ENCODE measurements at regions of chr19 and their contacts with region 1.

Region 1: DNA sequence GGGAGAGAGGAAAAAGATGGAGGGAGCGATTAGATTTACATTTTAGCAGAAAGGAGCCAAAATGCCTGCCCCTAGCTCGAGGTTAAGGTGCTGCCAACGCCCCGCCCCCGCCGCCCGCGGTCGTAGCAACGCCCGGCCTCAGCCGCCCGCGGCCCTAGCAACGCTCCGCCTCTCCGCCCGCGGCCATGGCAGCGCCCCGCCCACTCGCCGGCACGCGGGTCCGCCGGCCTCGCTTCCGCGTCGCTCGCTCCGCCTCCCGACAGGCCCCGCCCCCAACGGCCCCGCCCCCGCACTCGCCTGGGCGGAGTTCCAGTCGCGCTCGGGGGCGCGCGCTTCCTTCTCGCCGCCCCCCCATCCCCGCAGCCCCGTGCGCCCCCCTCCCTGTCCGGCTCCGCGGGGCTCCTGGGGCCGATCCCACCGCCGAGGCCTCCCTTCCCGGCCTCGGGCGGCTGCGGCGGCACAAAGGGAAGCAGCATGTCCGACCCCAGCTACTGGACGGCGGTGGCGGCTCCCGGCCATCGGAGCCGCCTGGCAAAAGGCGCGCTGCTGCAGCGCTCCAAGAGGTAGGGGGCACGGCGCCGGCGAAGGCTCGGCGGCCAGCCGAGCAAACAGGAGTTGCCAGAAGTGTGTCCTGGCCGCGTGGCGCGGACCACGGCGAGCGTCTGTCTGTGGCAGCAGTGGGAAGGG is 20.3 kb downstream of the MAST3 start:
- DNase-seq: peak; percentile 73
- ATAC-seq: peak; percentile 95
- H3K4me3 ChIP-seq: peak overlapping the region; percentile 61
- H3K27ac ChIP-seq: peak overlapping the region; percentile 8; the same call in 1 of the 2 replicates
- H3K4me1 ChIP-seq: peaks cover 13% of the 10 kb centered on the region
- H3K27me3 ChIP-seq: no peaks in the 10 kb centered on the region
- CTCF ChIP-seq: peak; percentile 11; the same call in 1 of the 2 replicates
- POLR2A ChIP-seq: no peak
- RAD21 ChIP-seq: no peak

Region 2: GRCh38 chr19:18152444-18152816 is 34.6 kb after region 1 on chr19:
- CTCF ChIA-PET with region 1: interaction called, 4 read pairs
- POLR2A ChIA-PET with region 1: no interaction called
- dilution Hi-C with region 1: no loop called
- in situ Hi-C with region 1: no loop called
- intact Hi-C with region 1: loop called (anchors 5 kb)
- DNase-seq: peak; percentile 96
- ATAC-seq: peak; percentile 55
- H3K4me3 ChIP-seq: peak overlapping the region; percentile 53
- H3K27ac ChIP-seq: peak overlapping the region; percentile 88
- H3K4me1 ChIP-seq: peaks cover 18% of the 10 kb centered on the region
- H3K27me3 ChIP-seq: no peaks in the 10 kb centered on the region
- CTCF ChIP-seq: peak; percentile 68
- POLR2A ChIP-seq: no peak
- RAD21 ChIP-seq: peak; percentile 43

Region 3: DNA sequence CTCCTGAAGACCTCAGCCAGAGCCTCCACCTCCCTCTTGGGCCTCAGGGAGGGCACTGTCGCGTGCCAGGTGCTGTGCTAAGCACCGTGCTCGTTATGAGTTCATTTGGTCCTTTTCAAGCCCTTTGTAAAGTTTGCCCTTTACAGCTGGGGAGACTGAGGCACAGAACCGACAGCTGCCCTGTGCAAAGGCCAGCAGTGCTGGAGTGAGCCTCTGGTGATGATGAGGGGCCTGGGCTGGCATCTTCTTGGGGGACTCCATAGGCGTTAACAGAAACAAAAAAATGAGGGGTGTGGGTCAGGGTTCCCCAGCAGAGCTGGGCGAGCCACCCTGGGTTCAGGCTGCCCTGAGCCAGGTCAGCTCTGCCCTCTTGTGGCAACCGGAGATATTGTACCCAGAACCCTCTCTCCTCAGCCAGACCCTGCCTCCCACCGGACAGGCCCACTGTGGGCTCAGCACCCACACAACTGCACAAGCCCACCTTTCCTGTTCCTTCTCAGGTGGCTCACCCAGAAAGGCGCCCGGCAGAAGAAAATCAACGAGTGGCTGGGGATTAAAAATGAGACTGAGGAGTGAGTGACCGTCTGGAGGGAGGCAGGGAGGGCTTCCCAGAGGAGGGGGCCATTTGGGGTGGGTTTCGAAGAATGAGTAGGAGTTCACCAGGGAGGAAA is 50.3 kb after region 1 on chr19:
- CTCF ChIA-PET with region 1: no interaction called
- POLR2A ChIA-PET with region 1: no interaction called
- dilution Hi-C with region 1: no loop called
- in situ Hi-C with region 1: no loop called
- intact Hi-C with region 1: loop called (anchors 1 kb)
- DNase-seq: peak; percentile 16
- ATAC-seq: peak; percentile 93
- H3K4me3 ChIP-seq: no peak overlapping the region
- H3K27ac ChIP-seq: no peak overlapping the region
- H3K4me1 ChIP-seq: no peaks in the 10 kb centered on the region
- H3K27me3 ChIP-seq: no peaks in the 10 kb centered on the region
- CTCF ChIP-seq: peak; percentile 65
- POLR2A ChIP-seq: no peak
- RAD21 ChIP-seq: peak; percentile 66

Region 4: GRCh38 chr19:18251587-18252369 is 133.9 kb after region 1 on chr19:
- CTCF ChIA-PET with region 1: no interaction called
- POLR2A ChIA-PET with region 1: no interaction called
- dilution Hi-C with region 1: no loop called
- in situ Hi-C with region 1: loop called (anchors 5 kb)
- intact Hi-C with region 1: loop called (anchors 1 kb)
- DNase-seq: peak; percentile 63
- ATAC-seq: peak; percentile 94
- H3K4me3 ChIP-seq: no peak overlapping the region
- H3K27ac ChIP-seq: no peak overlapping the region
- H3K4me1 ChIP-seq: no peaks in the 10 kb centered on the region
- H3K27me3 ChIP-seq: peaks cover 22% of the 10 kb centered on the region
- CTCF ChIP-seq: peak; percentile 93
- POLR2A ChIP-seq: 0 out of 2 replicates have a peak, but pooled peaks have one; percentile 48
- RAD21 ChIP-seq: peak; percentile 98

Region 5: DNA sequence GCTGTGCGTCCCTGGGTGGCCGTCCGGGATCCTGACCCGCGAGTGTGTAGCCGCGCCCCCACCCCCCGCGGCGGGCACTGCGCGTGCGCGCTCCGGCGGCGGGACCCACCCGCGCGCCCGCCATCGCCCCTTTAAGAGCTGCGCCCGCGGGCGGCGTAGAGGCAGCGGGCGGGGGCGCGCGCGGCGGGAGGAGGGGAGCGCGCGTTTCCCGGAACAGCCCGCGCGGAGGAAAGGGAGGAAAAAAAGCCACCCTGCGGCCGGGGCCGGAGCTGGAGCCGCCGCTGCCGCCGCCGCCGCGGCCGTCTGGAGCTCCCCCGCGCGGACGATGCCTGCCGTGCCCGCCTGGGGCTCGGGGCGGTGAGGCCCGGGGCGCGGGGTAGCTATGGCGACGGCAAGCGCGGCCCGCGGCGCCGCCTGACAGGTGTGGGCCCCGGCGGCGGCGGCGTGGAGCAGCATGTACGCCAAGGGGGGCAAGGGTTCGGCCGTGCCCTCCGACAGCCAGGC is 301.4 kb after region 1 on chr19 and contains the start of gene SSBP4:
- CTCF ChIA-PET with region 1: no interaction called
- POLR2A ChIA-PET with region 1: no interaction called
- dilution Hi-C with region 1: no loop called
- in situ Hi-C with region 1: loop called (anchors 10 kb)
- intact Hi-C with region 1: no loop called
- DNase-seq: peak; percentile 70
- ATAC-seq: peak; percentile 38
- H3K4me3 ChIP-seq: peak within 1 kb of the TSS; percentile 68
- H3K27ac ChIP-seq: peak within 1 kb of the TSS; percentile 90
- H3K4me1 ChIP-seq: peaks cover 37% of the 10 kb centered on the region
- H3K27me3 ChIP-seq: no peaks in the 10 kb centered on the region
- CTCF ChIP-seq: peak; percentile 50
- POLR2A ChIP-seq: peak; percentile 38
- RAD21 ChIP-seq: peak; percentile 24
- total RNA-seq, gene SSBP4: 13.3 and 14.9 TPM in 2 replicates